Activated T-helper 2 cell treated with anti-CD3 and anti-CD28 coated beads, Interferon-gamma antibody, Interleukin-2, Interleukin-4, amounts not matched to agents 10 μg/mL and 5 μg/mL and 100 μg/mL, durations not matched to agents 14 hours and 24 hours and 36 hours (primary cell): ENCODE measurements at regions of chr5 and their contacts with region 1.

Region 1: DNA sequence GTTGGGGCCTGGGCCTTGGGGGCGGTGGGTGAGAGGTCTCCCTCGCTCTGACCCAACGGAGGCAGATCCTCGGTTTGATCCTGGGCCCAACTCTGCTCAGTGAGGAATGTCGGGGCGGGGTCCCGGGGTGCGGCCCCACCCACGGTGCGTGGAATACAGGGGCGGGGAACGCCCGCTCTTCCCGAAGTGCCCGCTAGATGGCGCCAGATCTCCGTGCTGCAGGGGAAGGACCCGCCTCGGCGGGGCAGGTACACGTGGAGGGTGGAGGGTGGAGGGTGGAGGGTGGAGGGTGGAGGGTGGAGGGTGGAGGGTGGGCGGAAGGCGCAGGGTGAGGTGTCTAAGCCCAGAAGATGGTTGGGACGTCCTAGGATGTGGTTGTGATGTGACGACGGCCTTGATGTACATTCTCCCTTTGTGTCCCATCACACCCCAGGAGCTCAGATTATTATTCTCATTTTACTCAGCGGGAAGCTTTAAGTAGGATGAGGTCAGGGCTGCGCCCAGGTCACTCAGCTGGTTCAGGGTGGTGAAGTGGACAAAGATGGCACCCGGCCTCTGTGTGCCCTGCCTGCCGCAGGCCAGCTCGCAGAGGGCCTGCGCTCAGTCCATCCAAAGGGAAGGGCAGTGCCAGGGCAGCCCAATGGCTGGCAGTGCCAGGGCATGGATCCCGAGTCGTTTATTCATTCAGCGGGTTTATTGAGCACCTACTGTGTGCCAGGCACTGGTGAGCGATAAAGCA is 9.4 kb upstream of the RPS14 start:
- DNase-seq: peak; percentile 78
- H3K4me3 Mint-ChIP-seq: peak overlapping the region; percentile 19
- H3K27ac Mint-ChIP-seq: no peak overlapping the region
- H3K4me1 Mint-ChIP-seq: peaks cover 16% of the 10 kb centered on the region
- H3K27me3 Mint-ChIP-seq: no peaks in the 10 kb centered on the region

Region 2: DNA sequence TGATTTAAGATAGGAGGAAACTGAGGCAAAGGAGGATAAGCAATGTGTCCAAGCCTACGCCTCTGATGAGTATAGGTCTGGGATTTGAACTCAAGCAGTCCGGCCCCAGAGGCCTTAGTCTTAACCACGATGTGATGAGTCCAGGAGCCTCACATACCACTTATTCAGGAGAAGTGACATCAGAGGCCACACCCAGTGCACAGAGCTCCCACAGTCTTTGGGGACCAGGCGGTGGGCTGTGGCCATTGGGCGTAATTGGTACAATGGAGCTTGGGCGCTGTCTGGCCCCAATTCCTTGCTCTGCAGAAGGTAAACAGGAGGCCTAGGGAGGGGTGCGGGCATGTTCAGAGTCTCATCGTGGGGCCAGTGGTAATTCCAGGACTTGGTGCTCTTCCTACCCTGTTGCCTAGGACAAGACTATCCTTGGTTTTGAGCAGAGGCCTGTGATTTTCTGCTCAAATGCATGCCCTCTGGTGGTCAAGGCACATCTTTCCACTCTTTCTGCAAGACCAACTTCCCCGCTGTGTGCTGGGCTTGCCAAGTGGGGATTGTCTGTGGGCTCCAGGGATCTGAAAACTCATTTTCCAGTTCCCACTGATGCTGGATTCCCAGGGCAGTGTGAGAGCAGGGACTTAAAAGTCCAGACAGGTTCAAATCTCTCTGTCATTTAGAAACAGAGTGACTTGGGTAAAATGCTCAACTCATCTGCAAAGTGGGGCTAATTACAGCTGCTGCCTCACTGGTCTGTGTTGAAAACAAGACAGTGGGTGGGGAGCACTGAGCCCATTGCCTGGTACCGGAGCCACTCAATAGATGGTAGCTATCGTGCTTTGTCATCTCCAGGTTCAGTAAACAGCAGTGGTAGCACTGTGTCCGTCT is 64.7 kb after region 1 on chr5:
- intact Hi-C with region 1: loop called (anchors 2 kb)
- DNase-seq: no peak
- H3K4me3 Mint-ChIP-seq: no peak overlapping the region
- H3K27ac Mint-ChIP-seq: no peak overlapping the region
- H3K4me1 Mint-ChIP-seq: no peaks in the 10 kb centered on the region
- H3K27me3 Mint-ChIP-seq: no peaks in the 10 kb centered on the region

Region 3: DNA sequence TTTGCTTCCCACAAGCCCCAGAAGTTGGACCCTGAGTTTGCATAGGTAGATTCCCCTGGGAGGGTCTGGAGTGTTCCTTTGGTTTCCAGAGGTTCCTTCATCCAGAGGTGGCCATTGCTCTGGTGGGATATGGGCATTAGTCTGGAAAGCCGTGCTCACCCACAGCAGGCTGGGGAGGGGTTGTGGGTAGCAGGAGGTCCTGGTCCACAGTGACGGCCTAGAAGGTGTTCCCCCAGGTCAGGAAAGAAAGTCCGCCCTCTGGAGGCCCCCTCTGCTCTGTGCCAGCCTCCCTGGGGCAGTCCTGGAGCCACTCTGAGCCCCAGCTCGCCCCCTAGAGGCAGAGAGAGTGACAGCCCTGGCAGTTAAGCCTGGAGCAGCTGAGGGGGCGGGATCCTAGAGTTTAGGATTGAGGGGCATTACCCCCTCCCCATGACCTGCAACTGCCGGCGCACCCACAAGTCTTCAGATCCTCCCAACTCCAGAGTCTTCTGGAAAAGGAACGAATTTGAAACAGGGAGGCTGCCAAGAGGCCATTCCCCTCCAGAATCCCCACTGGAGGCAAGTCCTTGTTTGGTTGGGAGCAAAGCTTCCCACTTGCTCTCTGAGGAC is 85.7 kb after region 1 on chr5:
- intact Hi-C with region 1: loop called (anchors 1 kb)
- DNase-seq: peak; percentile 41
- H3K4me3 Mint-ChIP-seq: no peak overlapping the region
- H3K27ac Mint-ChIP-seq: no peak overlapping the region
- H3K4me1 Mint-ChIP-seq: no peaks in the 10 kb centered on the region
- H3K27me3 Mint-ChIP-seq: no peaks in the 10 kb centered on the region

Region 4: GRCh38 chr5:150560401-150561193 is 101.6 kb after region 1 on chr5:
- intact Hi-C with region 1: loop called (anchors 5 kb)
- DNase-seq: peak; percentile 65
- H3K4me3 Mint-ChIP-seq: no peak overlapping the region
- H3K27ac Mint-ChIP-seq: no peak overlapping the region
- H3K4me1 Mint-ChIP-seq: no peaks in the 10 kb centered on the region
- H3K27me3 Mint-ChIP-seq: no peaks in the 10 kb centered on the region

Region 5: DNA sequence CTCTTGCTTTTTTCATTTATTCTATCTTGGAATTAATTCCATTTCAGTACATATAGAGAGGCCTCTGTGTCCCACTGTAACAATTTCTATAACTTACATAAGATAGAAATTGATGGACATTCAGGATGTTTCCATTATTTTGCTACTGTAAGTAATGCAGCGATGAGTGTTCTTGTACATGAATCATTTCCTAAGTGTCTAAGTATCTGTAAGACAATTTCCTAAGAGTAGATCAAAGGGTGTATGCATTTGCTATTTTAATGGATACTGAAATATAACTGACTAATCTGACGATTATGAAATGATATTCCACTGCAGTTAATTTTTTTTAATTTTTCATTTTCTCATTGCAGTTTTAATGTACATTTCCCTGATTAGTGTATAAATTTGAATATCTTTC is 264.9 kb after region 1 on chr5:
- intact Hi-C with region 1: no loop called
- DNase-seq: no peak
- H3K4me3 Mint-ChIP-seq: no peak overlapping the region
- H3K27ac Mint-ChIP-seq: no peak overlapping the region
- H3K4me1 Mint-ChIP-seq: no peaks in the 10 kb centered on the region
- H3K27me3 Mint-ChIP-seq: no peaks in the 10 kb centered on the region